Kidney (tissue), 22 donors: ENCODE measurements at regions of chr5 and their contacts with region 1.

Region 1: DNA sequence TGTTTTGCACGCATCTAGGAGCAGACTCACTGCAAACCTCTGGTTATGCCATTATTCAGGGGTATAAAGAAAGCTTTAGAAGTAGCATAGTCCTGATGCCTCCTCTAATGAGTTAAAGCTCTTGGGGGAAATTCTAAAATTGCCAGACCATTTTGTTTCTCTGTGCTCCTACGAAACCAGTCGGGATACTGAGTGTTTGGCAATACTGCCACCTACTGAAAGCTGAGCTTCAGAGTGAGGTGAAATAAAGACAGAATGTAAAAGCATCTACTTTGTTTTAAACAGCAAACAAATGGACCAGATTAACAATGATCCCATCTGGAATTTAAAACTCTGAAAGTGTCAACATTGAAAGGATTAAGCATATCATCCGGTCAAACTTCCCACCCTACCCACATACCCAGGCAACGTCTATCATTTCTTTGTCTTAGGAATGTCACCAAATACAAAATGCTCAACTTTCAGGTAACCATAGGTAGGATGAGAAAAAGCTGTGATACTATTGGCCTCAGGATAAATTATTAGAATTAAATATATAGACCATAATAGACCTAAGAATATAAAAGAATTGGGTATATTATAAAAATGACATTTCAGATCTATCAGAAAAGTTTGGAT is 77.8 kb upstream of the SHISAL2B start:
- DNase-seq: peak in 3 of 5 donors; percentile 63 to 89 (median 88)
- H3K4me3 ChIP-seq: no peak overlapping the region
- H3K27ac ChIP-seq: no peak overlapping the region
- H3K4me1 ChIP-seq: no peaks in the 10 kb centered on the region
- H3K27me3 ChIP-seq: no peaks in the 10 kb centered on the region
- CTCF ChIP-seq: peak; percentile 89

Region 2: DNA sequence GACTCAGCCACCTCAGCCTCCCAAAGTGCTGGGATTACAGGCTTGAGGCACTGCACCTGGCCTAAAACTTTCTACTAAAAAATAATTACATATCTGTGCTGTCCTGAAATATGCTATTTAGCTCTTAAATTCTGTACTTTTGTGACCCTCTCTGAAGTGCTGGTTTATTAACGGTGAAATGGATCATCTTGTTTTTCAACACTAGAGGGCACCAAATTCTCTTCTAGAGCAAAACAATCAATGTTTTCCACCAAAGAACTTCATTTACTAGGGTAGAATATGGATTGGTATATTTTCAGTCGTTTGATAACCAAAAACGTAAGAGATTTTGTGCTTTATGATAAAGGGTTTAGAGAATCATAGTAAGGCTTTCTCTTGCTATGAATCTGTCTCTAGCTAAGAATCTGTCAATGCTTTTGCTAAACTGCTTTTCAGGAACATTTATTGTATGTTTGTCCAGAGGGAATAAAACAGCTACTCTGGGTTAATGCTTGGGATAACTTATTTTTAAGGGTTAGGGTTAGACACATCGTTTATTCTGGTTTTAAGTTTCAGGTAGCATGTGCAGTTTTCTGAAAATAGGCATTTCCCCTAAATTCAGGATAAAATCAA is 383.2 kb before region 1 on chr5:
- intact Hi-C with region 1: loop called (anchors 10 kb)
- DNase-seq: peak in 2 of 5 donors; percentile 53 to 56
- H3K4me3 ChIP-seq: no peak overlapping the region
- H3K27ac ChIP-seq: no peak overlapping the region
- H3K4me1 ChIP-seq: no peaks in the 10 kb centered on the region
- H3K27me3 ChIP-seq: no peaks in the 10 kb centered on the region
- CTCF ChIP-seq: peak; percentile 50